T-cell (primary cell): ENCODE measurements at regions of chrX and their contacts with region 1.

Region 1: GRCh38 chrX:49792376-49792775 is 36.7 kb upstream of the PAGE4 start:
- DNase-seq: no peak
- ATAC-seq: no peak
- H3K4me3 ChIP-seq: no peak overlapping the region
- H3K4me3 Mint-ChIP-seq: no peak overlapping the region
- H3K27ac ChIP-seq: no peak overlapping the region
- H3K27ac Mint-ChIP-seq: no peak overlapping the region
- H3K4me1 ChIP-seq: no peaks in the 10 kb centered on the region
- H3K4me1 Mint-ChIP-seq: no peaks in the 10 kb centered on the region
- H3K27me3 ChIP-seq: no peaks in the 10 kb centered on the region
- H3K27me3 Mint-ChIP-seq: peaks cover 0 to 6% of the 10 kb centered on the region in 2 donors

Region 2: DNA sequence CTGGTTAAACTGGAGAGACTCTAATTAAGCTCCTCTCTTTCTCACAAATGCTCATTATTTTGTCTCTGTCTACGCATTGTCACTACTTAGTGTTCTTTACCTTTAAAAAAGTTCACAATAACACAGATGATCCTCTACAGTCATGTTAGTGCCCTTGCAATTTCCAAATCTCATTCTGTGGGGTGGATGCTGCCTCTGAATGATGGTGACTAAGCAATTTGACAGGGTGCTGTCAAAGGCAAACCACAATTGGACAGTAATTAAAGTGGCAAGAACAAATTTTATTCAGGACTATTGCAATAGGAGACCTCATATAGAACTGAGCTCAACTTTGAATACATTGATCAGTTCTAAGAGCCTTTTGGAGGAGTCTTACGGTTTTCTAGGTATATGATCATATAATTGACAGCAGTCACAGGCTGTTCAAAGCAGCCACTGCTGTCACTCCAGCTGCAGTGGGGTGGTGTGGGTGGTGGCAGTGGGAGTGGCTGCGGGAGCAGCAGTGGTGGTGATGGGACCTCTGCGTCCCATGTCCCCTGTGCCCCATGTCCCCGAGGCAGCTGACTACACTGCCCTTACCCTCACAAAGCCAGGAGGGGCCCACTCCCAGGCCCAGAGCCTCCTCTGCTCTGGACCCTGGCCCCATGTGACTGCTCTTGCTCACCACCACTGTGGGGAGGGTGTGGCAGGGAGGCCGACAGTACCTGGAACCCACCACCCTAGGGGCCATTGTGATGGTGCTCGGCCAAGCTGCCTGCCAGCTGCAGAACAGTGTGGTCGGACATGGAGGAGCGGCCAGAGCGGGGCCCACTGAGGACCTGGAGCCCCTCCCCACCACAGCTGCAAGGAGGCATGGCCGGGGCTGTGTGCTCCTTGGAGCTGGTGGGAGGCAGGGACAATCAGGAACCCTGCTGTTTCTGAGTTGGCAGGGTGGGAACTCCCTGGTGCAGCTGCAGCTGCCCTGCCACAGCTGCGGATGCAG is 66.2 kb before region 1 on chrX:
- CTCF ChIA-PET with region 1: no interaction called
- POLR2A ChIA-PET with region 1: no interaction called
- DNase-seq: no peak
- ATAC-seq: no peak
- H3K4me3 ChIP-seq: no peak overlapping the region
- H3K4me3 Mint-ChIP-seq: no peak overlapping the region
- H3K27ac ChIP-seq: no peak overlapping the region
- H3K27ac Mint-ChIP-seq: no peak overlapping the region
- H3K4me1 ChIP-seq: no peaks in the 10 kb centered on the region
- H3K4me1 Mint-ChIP-seq: no peaks in the 10 kb centered on the region
- H3K27me3 ChIP-seq: peaks cover 0 to 2% of the 10 kb centered on the region in 2 experiments
- H3K27me3 Mint-ChIP-seq: peaks cover 0 to 5% of the 10 kb centered on the region in 2 donors

Region 3: DNA sequence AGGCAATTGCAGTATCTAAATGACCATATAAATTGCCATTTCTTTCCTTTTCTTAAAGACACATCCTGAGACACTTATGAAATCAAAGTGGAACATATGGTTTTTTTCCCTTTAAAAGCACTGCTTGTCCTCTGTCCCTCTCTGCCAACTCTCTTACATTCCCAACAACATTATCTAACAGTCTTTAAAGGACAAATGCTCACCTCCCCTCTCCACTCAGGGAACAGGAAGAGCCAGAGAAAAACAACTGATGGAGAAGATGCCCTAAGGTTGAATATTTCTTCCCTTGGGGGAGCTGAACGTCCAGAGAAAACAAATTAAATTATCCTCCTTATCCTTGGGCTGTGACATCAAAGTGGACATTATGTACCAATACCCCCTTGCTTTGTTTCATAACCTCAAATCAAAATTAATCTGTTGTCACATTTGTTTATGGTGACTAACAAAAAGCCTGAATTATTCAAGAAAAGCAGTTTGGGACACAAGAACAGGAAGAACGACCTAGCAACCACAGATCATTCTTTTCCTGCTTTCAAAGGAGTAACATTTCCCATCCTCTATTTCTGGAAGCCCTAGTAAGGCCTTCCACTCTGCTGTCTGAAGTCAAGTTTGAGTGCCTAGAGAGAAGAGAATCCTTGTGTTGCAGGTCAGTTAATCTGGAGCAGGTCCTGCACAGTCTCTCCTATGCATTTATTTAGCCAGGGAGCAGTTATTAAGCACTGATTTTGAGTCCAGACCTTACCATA is 44.0 kb before region 1 on chrX:
- CTCF ChIA-PET with region 1: no interaction called
- POLR2A ChIA-PET with region 1: interaction called in 1 of 2 experiments, 18 read pairs
- DNase-seq: no peak
- ATAC-seq: no peak
- H3K4me3 ChIP-seq: no peak overlapping the region
- H3K4me3 Mint-ChIP-seq: no peak overlapping the region
- H3K27ac ChIP-seq: no peak overlapping the region
- H3K27ac Mint-ChIP-seq: no peak overlapping the region
- H3K4me1 ChIP-seq: no peaks in the 10 kb centered on the region
- H3K4me1 Mint-ChIP-seq: no peaks in the 10 kb centered on the region
- H3K27me3 ChIP-seq: no peaks in the 10 kb centered on the region
- H3K27me3 Mint-ChIP-seq: peaks cover 11 to 30% of the 10 kb centered on the region in 2 donors